ENCODE measurements at regions of chr1 and their contacts with region 1.

Region 1: GRCh38 chr1:184483101-184483683 is 96.4 kb downstream of the C1orf21 start:
- DNase-seq: no peak

Region 2: GRCh38 chr1:184622136-184622823 is 139.1 kb after region 1 on chr1:
- intact Hi-C with region 1: loop called (anchors 10 kb)
- DNase-seq: no peak